A549 (cell line): ENCODE measurements at regions of chr19 and their contacts with region 1.

Region 1: GRCh38 chr19:41449079-41449864 is 6.3 kb downstream of the ERICH4 start:
- DNase-seq: peak; percentile 84 to 98
- ATAC-seq: peak; percentile 89 to 97
- H3K4me3 ChIP-seq: peak overlapping the region; percentile 26
- H3K27ac ChIP-seq: peak overlapping the region in 1 of 2 experiments; percentile 5; a peak in 1 of 6 replicates
- H3K4me1 ChIP-seq: 0 out of 3 replicates have a peak, but pooled peaks cover 3% of the 10 kb centered on the region
- CTCF ChIP-seq: peak; percentile 100
- EP300 ChIP-seq: no peak
- POLR2A ChIP-seq: no peak
- RAD21 ChIP-seq: peak; percentile 99 to 100

Region 2: DNA sequence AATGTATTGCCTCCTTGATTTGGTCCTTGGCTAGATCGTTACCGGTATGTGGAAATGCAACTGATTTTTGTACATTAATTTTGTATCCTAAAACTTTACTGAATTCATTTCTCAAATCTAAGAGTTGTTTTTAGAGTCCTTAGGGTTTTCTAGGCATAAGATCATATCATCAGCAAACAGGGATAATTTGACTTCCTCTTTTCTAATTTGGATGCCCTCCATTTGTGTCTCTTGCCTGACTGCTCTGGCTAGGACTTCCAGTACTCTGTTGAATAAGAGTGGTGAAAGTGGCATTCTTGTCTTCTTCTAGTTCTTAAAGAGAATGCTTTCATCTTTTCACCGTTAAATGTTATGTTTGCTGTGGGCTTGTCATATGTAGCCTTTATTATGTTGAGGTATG is 373.0 kb before region 1 on chr19:
- CTCF ChIA-PET with region 1: no interaction called
- POLR2A ChIA-PET with region 1: no interaction called
- DNase-seq: no peak
- ATAC-seq: no peak; a peak in 1 of 6 replicates
- H3K4me3 ChIP-seq: no peak overlapping the region
- H3K27ac ChIP-seq: no peak overlapping the region
- H3K4me1 ChIP-seq: no peaks in the 10 kb centered on the region
- CTCF ChIP-seq: no peak
- EP300 ChIP-seq: no peak
- POLR2A ChIP-seq: no peak
- RAD21 ChIP-seq: no peak

Region 3: DNA sequence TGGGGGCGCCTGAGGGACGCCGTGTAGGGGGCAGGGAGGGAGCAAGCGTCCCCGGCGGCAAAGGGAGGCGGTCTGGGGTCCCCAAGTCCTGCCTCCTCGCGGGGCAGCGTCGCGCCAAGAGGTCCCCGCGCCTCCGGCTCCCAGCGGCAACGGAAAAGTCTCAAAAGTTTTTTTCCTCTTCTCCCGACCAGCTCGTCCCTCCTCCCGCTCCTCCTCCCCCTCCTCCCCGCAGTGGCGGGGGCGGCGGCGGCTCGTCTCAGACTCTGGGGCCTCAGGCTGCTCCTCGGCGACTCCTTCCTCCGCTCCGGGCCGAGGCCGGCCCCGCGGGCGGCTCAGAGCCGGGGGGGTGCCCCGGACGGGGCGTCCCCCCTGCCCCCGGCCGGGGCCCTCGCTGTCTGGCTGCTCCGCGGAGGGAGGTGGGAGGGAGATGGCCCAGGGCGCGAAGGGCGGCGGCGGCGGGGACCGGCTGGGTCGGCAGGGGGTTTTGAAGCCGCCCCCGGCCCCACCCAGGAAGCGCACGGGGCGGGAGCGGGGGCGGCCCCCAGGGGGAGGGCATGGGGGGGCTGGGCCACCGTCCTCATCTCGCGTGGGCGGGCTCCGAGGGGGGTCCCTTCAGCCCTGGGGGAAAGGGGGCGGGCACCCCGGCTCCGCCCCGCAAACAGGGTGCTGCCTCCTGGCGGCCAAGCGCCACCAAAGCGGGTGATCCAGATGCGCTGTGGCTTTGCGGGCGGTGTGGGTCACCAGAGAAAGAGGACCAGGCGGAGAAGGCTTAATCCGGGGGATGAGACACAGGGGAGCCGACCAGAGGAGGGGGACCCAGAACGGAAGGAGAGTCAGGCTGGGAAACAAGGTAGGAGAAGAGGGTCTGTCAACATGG is 95.6 kb before region 1 on chr19 and contains the start of gene TGFB1:
- CTCF ChIA-PET with region 1: interaction called, 12 read pairs
- POLR2A ChIA-PET with region 1: no interaction called
- DNase-seq: peak; percentile 92 to 100
- ATAC-seq: peak; percentile 53 to 71
- H3K4me3 ChIP-seq: peak within 1 kb of the TSS; percentile 72
- H3K27ac ChIP-seq: peak within 1 kb of the TSS; percentile 90 to 92
- H3K4me1 ChIP-seq: peaks cover 15% of the 10 kb centered on the region
- CTCF ChIP-seq: peak; percentile 99
- EP300 ChIP-seq: peak in 1 of 2 experiments; percentile 42; a peak in 1 of 5 replicates
- POLR2A ChIP-seq: peak; percentile 63
- RAD21 ChIP-seq: peak in 1 of 2 experiments; percentile 76; a peak in 4 of 5 replicates
- polyA plus RNA-seq, gene TGFB1: 6.0 and 13.2 TPM in 2 replicates

Region 4: DNA sequence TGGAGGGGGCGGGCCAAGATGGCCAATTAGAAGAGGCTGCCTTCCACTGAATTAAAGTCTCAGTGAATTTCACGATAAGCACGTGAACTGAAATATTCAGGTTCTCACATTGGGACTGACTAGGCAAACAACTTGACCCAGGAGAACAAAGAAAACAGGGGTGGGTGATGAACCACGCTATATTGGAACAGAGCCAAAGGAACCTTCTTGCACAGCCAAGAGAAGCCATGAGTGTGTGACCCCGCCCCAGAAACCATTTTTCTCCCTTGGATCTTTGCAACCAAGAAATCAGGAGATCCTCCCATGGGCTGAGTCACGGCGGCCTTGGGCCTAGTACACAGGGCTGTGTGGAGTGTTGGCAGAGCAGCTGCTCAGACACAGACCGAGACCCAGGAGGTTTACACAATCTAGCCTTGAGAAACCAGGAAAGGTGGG is 30.5 kb after region 1 on chr19:
- CTCF ChIA-PET with region 1: interaction called, 45 read pairs
- POLR2A ChIA-PET with region 1: no interaction called
- DNase-seq: peak in 1 of 2 experiments; percentile 41
- ATAC-seq: peak in 1 of 2 experiments; percentile 53; a peak in 3 of 6 replicates
- H3K4me3 ChIP-seq: no peak overlapping the region
- H3K27ac ChIP-seq: no peak overlapping the region
- H3K4me1 ChIP-seq: no peaks in the 10 kb centered on the region
- CTCF ChIP-seq: no peak
- EP300 ChIP-seq: no peak
- POLR2A ChIP-seq: no peak
- RAD21 ChIP-seq: no peak

Region 5: DNA sequence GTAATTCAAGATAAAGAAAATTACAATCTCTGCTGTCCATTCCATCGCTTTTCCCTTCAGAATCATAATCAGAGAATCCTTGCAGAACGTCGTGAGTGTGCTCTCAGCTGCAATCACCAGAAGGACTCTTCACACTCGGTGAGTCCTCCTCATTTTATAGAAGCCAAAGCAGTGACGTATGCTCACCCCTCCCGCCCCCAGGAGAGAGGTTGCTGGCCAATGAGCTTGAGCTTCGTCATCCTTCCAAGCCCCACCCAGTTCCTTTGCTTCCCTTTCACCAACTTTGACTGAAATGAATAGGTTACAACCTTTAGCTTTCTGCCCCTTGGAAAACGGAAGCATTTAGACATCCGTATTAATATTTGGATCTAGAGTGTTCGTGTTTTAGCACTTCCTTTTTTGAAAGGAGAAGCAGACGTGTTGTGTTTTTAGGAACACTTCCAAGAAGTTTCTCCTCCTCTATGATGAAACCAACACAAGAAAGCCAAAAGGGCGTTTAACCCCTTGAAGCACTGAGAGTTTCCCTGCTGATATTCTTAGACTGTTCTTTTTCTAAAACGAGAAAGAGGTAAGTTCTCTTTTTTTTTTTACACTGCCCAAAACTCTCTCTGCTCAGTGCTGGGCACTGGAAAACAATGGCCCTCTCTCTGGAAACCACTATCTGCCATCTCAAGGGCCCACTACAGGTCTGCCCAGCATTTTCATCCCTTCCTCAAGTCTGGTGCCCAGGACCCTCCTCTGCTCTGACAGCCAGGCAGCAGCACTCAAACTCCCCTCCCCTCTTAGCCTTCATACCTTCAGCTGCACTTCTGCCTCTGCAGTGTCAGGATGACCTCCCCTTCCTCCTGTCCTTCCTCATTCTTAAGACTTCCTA is 82.4 kb after region 1 on chr19:
- CTCF ChIA-PET with region 1: interaction called, 169 read pairs
- POLR2A ChIA-PET with region 1: no interaction called
- DNase-seq: peak; percentile 85
- ATAC-seq: peak; percentile 73 to 86
- H3K4me3 ChIP-seq: peak overlapping the region; percentile 38
- H3K27ac ChIP-seq: no peak overlapping the region
- H3K4me1 ChIP-seq: peaks cover 7% of the 10 kb centered on the region; the same call in 2 of the 3 replicates
- CTCF ChIP-seq: no peak
- EP300 ChIP-seq: no peak
- POLR2A ChIP-seq: no peak
- RAD21 ChIP-seq: no peak

Region 6: GRCh38 chr19:41597600-41598041 is 148.3 kb after region 1 on chr19:
- CTCF ChIA-PET with region 1: interaction called, 117 read pairs
- POLR2A ChIA-PET with region 1: no interaction called
- DNase-seq: peak; percentile 85 to 99
- ATAC-seq: peak; percentile 70 to 90; a peak in 5 of 6 replicates
- H3K4me3 ChIP-seq: no peak overlapping the region
- H3K27ac ChIP-seq: no peak overlapping the region
- H3K4me1 ChIP-seq: no peaks in the 10 kb centered on the region
- CTCF ChIP-seq: peak; percentile 99
- EP300 ChIP-seq: no peak
- POLR2A ChIP-seq: no peak
- RAD21 ChIP-seq: peak; percentile 44 to 54; a peak in 3 of 5 replicates

Region 7: GRCh38 chr19:41837981-41838708 is 388.9 kb after region 1 on chr19:
- CTCF ChIA-PET with region 1: interaction called, 11 read pairs
- POLR2A ChIA-PET with region 1: no interaction called
- DNase-seq: no peak
- ATAC-seq: peak; percentile 7 to 20; a peak in 4 of 6 replicates
- H3K4me3 ChIP-seq: no peak overlapping the region
- H3K27ac ChIP-seq: no peak overlapping the region
- H3K4me1 ChIP-seq: no peaks in the 10 kb centered on the region
- CTCF ChIP-seq: no peak
- EP300 ChIP-seq: no peak
- POLR2A ChIP-seq: no peak
- RAD21 ChIP-seq: no peak